HepG2 (cell line): ENCODE measurements at regions of chr6 and their contacts with region 1.

Region 1: GRCh38 chr6:132962936-132963868 is 148.8 kb downstream of the RPS12 start:
- DNase-seq: peak; percentile 79
- ATAC-seq: peak; percentile 99
- H3K4me3 ChIP-seq: no peak overlapping the region
- H3K27ac ChIP-seq: no peak overlapping the region
- H3K4me1 ChIP-seq: peaks cover 41% of the 10 kb centered on the region
- H3K27me3 ChIP-seq: no peaks in the 10 kb centered on the region
- CTCF ChIP-seq: peak; percentile 92
- EP300 ChIP-seq: no peak
- POLR2A ChIP-seq: no peak
- RAD21 ChIP-seq: peak; percentile 94

Region 2: DNA sequence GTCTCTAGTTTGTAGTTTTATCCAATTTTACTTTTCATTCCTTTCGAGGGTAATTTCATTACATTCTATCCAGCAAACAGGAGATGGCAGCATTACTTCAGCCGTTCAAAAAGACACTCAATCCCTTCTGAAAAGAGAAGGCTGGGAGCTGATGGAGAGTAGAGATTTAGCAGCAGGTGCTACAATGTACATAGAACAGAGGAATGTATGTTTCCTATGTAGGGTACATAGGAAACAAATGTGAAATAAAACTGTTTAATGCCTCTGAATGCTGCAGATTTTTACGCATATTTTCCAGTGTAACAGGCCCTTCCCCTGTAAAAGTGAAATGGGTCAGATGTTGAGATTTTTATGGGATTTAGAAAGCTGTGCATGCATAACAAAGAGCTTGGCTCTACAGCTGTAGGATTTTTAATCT is 132.9 kb before region 1 on chr6:
- CTCF ChIA-PET with region 1: interaction called, 4 read pairs
- POLR2A ChIA-PET with region 1: no interaction called
- in situ Hi-C with region 1: no loop called
- intact Hi-C with region 1: loop called (anchors 2 kb)
- DNase-seq: peak; percentile 33
- ATAC-seq: peak; percentile 81
- H3K4me3 ChIP-seq: no peak overlapping the region
- H3K27ac ChIP-seq: no peak overlapping the region
- H3K4me1 ChIP-seq: no peaks in the 10 kb centered on the region
- H3K27me3 ChIP-seq: peaks cover 0 to 7% of the 10 kb centered on the region in 2 experiments; a peak in 1 of 5 replicates
- CTCF ChIP-seq: peak; percentile 70
- EP300 ChIP-seq: no peak
- POLR2A ChIP-seq: no peak
- RAD21 ChIP-seq: peak; percentile 57; the same call in 1 of the 2 replicates

Region 3: DNA sequence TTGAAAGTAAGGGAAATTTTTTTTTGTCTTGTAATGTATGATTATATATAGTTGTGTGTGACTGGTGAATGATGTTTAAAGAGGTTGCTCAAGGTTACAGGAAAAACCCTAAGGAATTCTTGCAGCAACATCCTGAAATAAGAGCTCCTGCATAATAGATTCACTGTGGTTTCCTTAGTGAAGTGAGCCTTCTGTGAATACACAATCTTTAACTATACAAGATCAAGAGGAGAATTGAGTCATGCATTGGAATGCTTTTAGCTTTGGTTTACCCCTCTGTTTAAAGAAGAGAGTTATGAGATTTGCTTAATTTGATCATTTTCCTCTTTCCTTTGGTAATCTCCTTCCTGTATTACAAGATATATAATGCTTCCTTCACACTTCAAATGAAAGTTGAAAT is 136.4 kb after region 1 on chr6:
- CTCF ChIA-PET with region 1: no interaction called
- POLR2A ChIA-PET with region 1: no interaction called
- in situ Hi-C with region 1: no loop called
- intact Hi-C with region 1: loop called (anchors 5 kb)
- DNase-seq: peak; percentile 93
- ATAC-seq: no peak; the same call in 2 of the 3 replicates
- H3K4me3 ChIP-seq: no peak overlapping the region
- H3K27ac ChIP-seq: no peak overlapping the region
- H3K4me1 ChIP-seq: peaks cover 9% of the 10 kb centered on the region
- H3K27me3 ChIP-seq: no peaks in the 10 kb centered on the region; a peak in 1 of 5 replicates
- CTCF ChIP-seq: no peak
- EP300 ChIP-seq: peak in 1 of 2 experiments; percentile 77; a peak in 2 of 4 replicates
- POLR2A ChIP-seq: no peak
- RAD21 ChIP-seq: no peak

Region 4: GRCh38 chr6:133368664-133369063 is 405.5 kb after region 1 on chr6:
- CTCF ChIA-PET with region 1: no interaction called
- POLR2A ChIA-PET with region 1: no interaction called
- in situ Hi-C with region 1: no loop called
- intact Hi-C with region 1: loop called (anchors 1 kb)
- DNase-seq: peak; percentile 22
- ATAC-seq: peak; percentile 73
- H3K4me3 ChIP-seq: no peak overlapping the region
- H3K27ac ChIP-seq: no peak overlapping the region
- H3K4me1 ChIP-seq: no peaks in the 10 kb centered on the region
- H3K27me3 ChIP-seq: no peaks in the 10 kb centered on the region
- CTCF ChIP-seq: peak; percentile 60
- EP300 ChIP-seq: no peak
- POLR2A ChIP-seq: no peak
- RAD21 ChIP-seq: no peak

Region 5: GRCh38 chr6:133553652-133554051 is 590.5 kb after region 1 on chr6:
- CTCF ChIA-PET with region 1: interaction called, 3 read pairs
- POLR2A ChIA-PET with region 1: no interaction called
- in situ Hi-C with region 1: no loop called
- intact Hi-C with region 1: loop called (anchors 1 kb)
- DNase-seq: peak; percentile 46
- ATAC-seq: peak; percentile 90
- H3K4me3 ChIP-seq: no peak overlapping the region
- H3K27ac ChIP-seq: no peak overlapping the region
- H3K4me1 ChIP-seq: no peaks in the 10 kb centered on the region
- H3K27me3 ChIP-seq: no peaks in the 10 kb centered on the region
- CTCF ChIP-seq: peak; percentile 71
- EP300 ChIP-seq: no peak
- POLR2A ChIP-seq: no peak
- RAD21 ChIP-seq: peak; percentile 40; the same call in 1 of the 2 replicates